ENCODE measurements at regions of chr4 and their contacts with region 1.

Region 1: GRCh38 chr4:38730830-38731646 is 51.8 kb downstream of the TLR10 start:
- DNase-seq: peak; percentile 66
- H3K4me3 Mint-ChIP-seq: no peak overlapping the region
- H3K27ac Mint-ChIP-seq: no peak overlapping the region
- H3K4me1 Mint-ChIP-seq: peaks cover 22% of the 10 kb centered on the region
- H3K27me3 Mint-ChIP-seq: peaks cover 22% of the 10 kb centered on the region

Region 2: GRCh38 chr4:37802068-37802666 is 928.9 kb before region 1 on chr4:
- intact Hi-C with region 1: loop called (anchors 1 kb)
- DNase-seq: no peak
- H3K4me3 Mint-ChIP-seq: no peak overlapping the region
- H3K27ac Mint-ChIP-seq: no peak overlapping the region
- H3K4me1 Mint-ChIP-seq: no peaks in the 10 kb centered on the region
- H3K27me3 Mint-ChIP-seq: peaks cover 6% of the 10 kb centered on the region

Region 3: DNA sequence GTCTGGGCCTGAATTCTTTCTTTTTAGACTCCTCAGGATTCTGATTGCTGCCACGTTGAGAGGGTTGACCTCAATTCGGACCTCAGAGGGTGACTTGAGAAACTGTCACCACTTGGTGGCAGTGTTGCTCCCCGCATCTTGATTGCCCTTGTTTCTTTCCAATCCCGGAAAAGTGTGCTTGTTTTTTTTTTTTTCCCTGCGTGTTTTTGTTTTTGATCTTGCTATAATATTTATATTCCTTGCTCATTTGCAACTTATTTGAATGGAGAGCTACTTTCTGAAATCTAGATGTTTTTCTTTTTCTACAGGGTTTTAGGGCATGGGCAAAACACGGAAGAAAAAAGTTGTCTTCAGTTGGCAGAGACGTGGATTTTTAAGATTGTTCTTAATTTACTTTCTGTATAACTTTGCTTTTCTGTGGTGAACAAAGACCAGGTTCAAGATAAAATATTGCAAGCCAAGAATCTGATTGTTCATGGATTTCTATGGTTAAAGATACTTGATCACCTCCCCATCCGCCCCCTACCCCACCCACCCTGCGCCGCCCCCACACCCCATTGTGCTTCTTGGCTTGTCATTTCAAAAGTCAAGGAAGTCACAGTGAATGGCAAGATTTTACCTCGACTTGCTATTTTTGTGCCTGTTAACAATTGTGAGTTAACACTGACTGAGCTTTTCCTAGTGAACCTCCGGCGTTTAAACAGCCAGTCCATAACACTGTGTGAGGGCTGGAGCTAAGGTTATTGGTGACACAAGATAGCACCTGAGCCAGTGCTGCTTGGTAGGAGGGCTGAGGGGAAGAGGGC is 668.7 kb before region 1 on chr4:
- intact Hi-C with region 1: loop called (anchors 1 kb)
- DNase-seq: peak; percentile 42
- H3K4me3 Mint-ChIP-seq: peak overlapping the region; percentile 83
- H3K27ac Mint-ChIP-seq: peak overlapping the region; percentile 69
- H3K4me1 Mint-ChIP-seq: peaks cover 16% of the 10 kb centered on the region
- H3K27me3 Mint-ChIP-seq: no peaks in the 10 kb centered on the region

Region 4: GRCh38 chr4:38319456-38320342 is 411.3 kb before region 1 on chr4:
- intact Hi-C with region 1: loop called (anchors 1 kb)
- DNase-seq: peak; percentile 83
- H3K4me3 Mint-ChIP-seq: peak overlapping the region; percentile 48
- H3K27ac Mint-ChIP-seq: peak overlapping the region; percentile 79
- H3K4me1 Mint-ChIP-seq: peaks cover 55% of the 10 kb centered on the region
- H3K27me3 Mint-ChIP-seq: peaks cover 5% of the 10 kb centered on the region

Region 5: GRCh38 chr4:39319678-39320077 is 588.6 kb after region 1 on chr4:
- intact Hi-C with region 1: no loop called
- DNase-seq: no peak
- H3K4me3 Mint-ChIP-seq: no peak overlapping the region
- H3K27ac Mint-ChIP-seq: no peak overlapping the region
- H3K4me1 Mint-ChIP-seq: no peaks in the 10 kb centered on the region
- H3K27me3 Mint-ChIP-seq: no peaks in the 10 kb centered on the region